H1 (cell line): ENCODE measurements at regions of chr10 and their contacts with region 1.

Region 1: DNA sequence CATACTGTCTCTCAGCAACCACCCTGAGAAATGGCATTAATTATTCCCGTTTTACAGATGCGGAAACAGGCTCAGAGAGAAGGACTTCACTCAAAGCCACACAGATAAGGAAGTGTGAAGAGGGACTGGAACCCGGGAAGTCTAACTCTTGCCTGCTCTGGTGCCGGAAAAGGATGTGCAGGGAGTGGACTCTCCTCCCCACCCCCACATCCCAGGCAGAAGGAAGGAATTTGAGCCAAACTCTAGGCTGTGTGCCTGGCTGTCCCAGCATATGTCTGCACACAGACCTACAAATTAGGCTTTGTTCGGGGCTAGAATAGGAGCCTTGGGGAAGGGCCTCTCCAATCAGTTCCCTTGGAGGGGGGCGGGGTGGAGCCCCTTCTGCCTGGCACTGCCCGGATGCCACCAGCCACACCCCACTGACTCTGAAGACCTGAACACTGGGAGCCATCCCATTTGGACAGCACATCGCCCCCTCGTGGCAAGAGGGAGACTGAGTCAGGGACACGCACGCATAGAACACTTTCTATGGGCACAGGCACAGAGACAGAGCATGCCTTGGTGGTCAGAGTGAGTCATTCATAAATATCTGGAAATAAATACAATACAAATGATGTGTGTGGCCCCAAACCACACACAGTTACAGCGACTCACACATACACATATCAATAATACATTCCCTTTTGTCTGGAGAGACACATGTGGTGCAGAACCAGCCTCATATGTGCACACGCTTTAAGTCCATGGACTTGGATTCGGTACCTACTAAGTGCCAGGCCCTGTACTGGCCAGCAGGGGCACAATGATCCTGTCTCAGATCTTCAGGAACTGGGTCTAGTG is 13.1 kb downstream of the LZTS2 start:
- DNase-seq: peak in 1 of 2 experiments; percentile 88
- H3K4me3 ChIP-seq: no peak overlapping the region
- H3K27ac ChIP-seq: no peak overlapping the region
- H3K4me1 ChIP-seq: peaks cover 0 to 12% (median 7%) of the 10 kb centered on the region in 4 experiments; a peak in 4 of 7 replicates
- H3K27me3 ChIP-seq: peaks cover 5 to 20% (median 14%) of the 10 kb centered on the region in 4 experiments
- CTCF ChIP-seq: peak; percentile 76 to 99 (median 98)
- EP300 ChIP-seq: no peak
- POLR2A ChIP-seq: no peak
- RAD21 ChIP-seq: peak; percentile 55 to 68

Region 2: GRCh38 chr10:100969187-100970075 is 43.3 kb before region 1 on chr10 and contains the start of gene SEMA4G:
- CTCF ChIA-PET with region 1: interaction called, 32 read pairs
- POLR2A ChIA-PET with region 1: interaction called, 7 read pairs
- DNase-seq: peak; percentile 67 to 90
- H3K4me3 ChIP-seq: peak within 1 kb of the TSS; percentile 67 to 97 (median 72)
- H3K27ac ChIP-seq: no peak within 1 kb of the TSS
- H3K4me1 ChIP-seq: peaks cover 7 to 19% (median 10%) of the 10 kb centered on the region in 4 experiments
- H3K27me3 ChIP-seq: peaks cover 0 to 3% (median 1%) of the 10 kb centered on the region in 4 experiments; a peak in 1 of 7 replicates
- CTCF ChIP-seq: peak; percentile 66 to 80 (median 71)
- EP300 ChIP-seq: no peak
- POLR2A ChIP-seq: no peak
- RAD21 ChIP-seq: peak in 1 of 2 experiments; percentile 36; a peak in 1 of 4 replicates
- total RNA-seq, gene SEMA4G: 7.1 and 7.6 TPM in 2 replicates

Region 3: DNA sequence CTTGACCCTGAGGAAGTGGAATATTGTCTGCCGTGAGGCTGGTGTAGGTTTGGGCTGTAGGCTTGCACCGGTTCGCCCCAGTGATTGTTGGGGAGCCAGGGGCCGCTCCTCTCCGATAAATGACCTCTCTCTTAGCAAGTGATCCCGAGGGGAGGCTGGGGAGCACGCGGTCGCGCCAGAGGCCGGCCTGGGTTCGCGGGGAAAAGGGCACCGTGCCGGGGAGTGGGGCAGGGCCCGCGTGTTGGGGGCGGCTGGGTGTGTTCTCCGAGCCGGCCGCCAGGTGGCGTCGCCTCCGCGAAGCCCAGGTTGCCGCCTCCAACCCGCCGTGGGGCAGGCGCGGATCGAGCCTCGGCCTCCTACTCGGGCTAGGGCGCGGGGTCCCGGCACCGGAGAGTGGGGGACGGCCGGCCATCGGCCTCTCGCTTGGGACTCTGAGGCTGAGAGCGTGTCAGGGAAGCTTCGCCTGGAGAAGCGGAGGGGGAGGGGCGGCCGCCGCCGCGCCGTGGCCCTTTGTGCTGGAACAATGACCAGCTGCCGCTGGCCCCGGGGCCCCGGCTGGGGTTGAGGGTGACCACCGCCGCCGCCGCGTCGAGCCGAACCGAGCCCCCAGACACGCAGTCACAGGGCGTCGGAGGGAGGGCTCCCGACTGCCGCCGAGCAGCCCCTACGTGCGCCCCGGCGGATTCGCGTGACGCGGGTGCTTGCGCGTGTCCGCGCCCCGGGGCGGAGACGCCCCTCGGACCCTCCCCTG is 13.6 kb before region 1 on chr10:
- CTCF ChIA-PET with region 1: interaction called, 464 read pairs
- POLR2A ChIA-PET with region 1: interaction called, 143 read pairs
- DNase-seq: peak in 1 of 2 experiments; percentile 87
- H3K4me3 ChIP-seq: peak overlapping the region; percentile 75 to 90 (median 76)
- H3K27ac ChIP-seq: peak overlapping the region; percentile 80; the same call in 1 of the 2 replicates
- H3K4me1 ChIP-seq: peaks cover 4 to 24% (median 14%) of the 10 kb centered on the region in 4 experiments
- H3K27me3 ChIP-seq: no peaks in the 10 kb centered on the region
- CTCF ChIP-seq: peak in 2 of 3 experiments; percentile 69 to 87; a peak in 3 of 4 replicates
- EP300 ChIP-seq: 0 out of 3 replicates have a peak, but pooled peaks of 1 of the 2 experiments have one; percentile 32
- POLR2A ChIP-seq: peak in 1 of 2 experiments; percentile 71; a peak in 1 of 3 replicates
- RAD21 ChIP-seq: peak; percentile 22 to 50; a peak in 2 of 4 replicates

Region 4: DNA sequence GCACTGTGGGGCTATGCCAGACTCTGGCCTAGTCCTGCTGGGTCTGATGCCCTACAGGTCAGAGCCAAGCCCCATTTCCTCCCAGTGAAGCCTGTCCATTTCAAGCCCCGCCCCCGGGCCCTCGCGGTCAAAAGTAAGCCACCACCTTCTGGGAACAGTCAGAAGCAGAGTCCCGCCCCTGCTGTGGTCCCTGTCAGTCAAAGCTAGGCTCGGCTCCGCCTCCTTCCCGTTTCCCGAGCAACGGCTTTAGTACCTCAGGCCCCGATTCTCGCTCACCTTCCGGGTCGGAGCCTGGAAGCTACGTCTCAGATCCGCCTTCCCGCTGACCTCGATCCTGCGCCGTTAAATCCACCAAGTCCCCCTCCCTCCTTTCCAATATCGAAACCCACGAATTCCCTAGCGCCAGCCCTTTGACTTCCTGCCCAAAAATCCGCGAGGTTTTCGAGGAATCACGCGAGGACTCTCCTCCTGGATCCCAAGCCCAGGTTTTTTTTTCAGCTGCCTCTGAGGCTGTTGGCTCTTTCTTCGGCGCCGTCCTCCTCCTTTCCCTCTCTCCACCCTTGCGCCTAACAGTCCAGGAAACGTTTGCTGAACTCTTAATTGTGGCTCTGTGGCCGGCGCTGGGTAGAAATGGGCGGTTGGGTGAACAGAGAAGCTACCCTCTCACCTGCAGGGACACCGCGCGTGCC is 30.1 kb after region 1 on chr10:
- CTCF ChIA-PET with region 1: interaction called, 145 read pairs
- POLR2A ChIA-PET with region 1: interaction called, 5 read pairs
- DNase-seq: peak; percentile 90 to 97
- H3K4me3 ChIP-seq: peak overlapping the region; percentile 65 to 82 (median 73)
- H3K27ac ChIP-seq: no peak overlapping the region
- H3K4me1 ChIP-seq: peaks cover 3 to 24% (median 13%) of the 10 kb centered on the region in 4 experiments
- H3K27me3 ChIP-seq: peaks cover 20 to 42% (median 36%) of the 10 kb centered on the region in 4 experiments
- CTCF ChIP-seq: no peak
- EP300 ChIP-seq: no peak
- POLR2A ChIP-seq: no peak
- RAD21 ChIP-seq: no peak

Region 5: GRCh38 chr10:101067356-101068083 is 54.8 kb after region 1 on chr10:
- CTCF ChIA-PET with region 1: interaction called, 48 read pairs
- POLR2A ChIA-PET with region 1: interaction called, 5 read pairs
- DNase-seq: peak in 1 of 2 experiments; percentile 94
- H3K4me3 ChIP-seq: peak overlapping the region; percentile 42 to 90 (median 64)
- H3K27ac ChIP-seq: no peak overlapping the region
- H3K4me1 ChIP-seq: peaks cover 4 to 27% (median 15%) of the 10 kb centered on the region in 4 experiments
- H3K27me3 ChIP-seq: peaks cover 43 to 63% (median 56%) of the 10 kb centered on the region in 4 experiments
- CTCF ChIP-seq: peak; percentile 64 to 93 (median 81)
- EP300 ChIP-seq: no peak
- POLR2A ChIP-seq: no peak
- RAD21 ChIP-seq: peak; percentile 76 to 80